H1 (cell line): ENCODE measurements at regions of chr19 and their contacts with region 1.

Region 1: DNA sequence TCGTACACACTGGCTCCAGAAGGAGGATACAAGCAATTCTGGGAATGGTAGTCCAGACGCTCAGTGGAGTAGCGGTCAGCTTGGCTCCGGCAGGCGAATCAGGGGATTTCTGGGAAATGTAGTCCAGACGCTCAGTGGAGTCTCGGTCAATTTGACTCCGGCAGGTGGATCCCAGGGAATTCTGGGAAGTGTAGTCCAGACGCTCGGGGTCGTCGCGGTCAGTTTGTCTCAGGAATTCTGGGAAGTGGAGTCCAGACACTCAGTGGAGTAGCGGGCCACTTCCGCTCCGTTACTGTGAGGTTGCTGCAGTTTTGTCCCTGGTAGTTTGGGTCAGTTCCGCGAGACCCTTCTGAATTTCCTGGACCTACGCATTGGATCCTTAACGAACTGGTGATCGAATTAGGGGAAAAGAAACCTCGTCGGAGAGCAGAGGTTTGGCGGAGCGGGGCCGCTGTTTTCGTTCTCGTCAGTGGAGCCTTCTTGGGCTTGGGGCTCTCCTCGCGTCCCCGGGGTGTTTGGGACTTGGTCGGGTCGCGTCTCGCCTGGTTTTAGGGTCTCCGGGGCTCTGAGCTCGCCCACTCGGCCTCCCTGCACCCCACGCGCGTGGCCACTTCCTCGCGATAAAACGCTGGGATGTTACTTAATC is at the start of gene ZNF225:
- DNase-seq: peak; percentile 78 to 97
- H3K4me3 ChIP-seq: peak within 1 kb of the TSS; percentile 80 to 100 (median 95)
- H3K27ac ChIP-seq: peak within 1 kb of the TSS; percentile 77
- H3K4me1 ChIP-seq: no peaks in the 10 kb centered on the region
- H3K27me3 ChIP-seq: no peaks in the 10 kb centered on the region
- CTCF ChIP-seq: no peak
- EP300 ChIP-seq: no peak
- POLR2A ChIP-seq: peak; percentile 92 to 96
- RAD21 ChIP-seq: no peak
- total RNA-seq, gene ZNF225: 4.3 and 5.0 TPM in 2 replicates

Region 2: DNA sequence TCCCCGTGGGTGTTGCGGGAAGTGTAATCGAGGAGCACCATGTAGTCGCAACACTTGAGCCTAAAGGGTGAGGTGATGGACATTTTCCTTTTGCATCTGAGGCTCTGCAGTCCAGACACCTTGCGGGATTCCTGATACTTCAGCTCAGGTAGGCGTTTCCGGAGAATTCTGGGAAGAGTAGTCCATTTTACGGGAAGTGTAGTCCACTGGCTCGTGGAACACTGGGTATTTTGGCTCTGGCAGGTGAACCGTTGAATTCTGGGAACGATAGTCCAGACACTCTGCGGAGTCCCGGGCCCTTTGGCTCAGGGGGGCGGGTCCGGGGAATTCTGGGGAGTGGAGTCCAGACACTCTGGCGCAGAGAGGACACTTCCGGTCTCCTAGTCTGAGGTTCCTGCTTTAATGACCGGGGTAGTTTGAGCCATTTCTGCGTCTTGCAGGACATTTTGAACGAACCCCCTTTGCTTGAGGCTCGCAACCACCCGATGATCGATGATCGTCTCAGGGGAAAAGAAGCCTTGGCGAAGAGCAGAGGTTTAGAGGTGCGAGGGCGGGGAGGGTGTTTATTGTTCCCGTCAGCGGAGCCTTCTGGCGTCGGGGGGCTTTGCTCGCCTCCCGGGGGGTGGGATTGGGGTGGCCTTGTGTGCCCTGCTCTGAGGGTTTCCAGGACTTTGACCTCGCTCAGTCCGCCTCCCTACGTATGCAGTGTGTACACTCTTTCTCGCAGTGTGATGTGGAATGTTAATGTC is 61.4 kb before region 1 on chr19 and contains the start of gene ZNF223:
- CTCF ChIA-PET with region 1: interaction called, 5 read pairs
- POLR2A ChIA-PET with region 1: interaction called, 18 read pairs
- DNase-seq: peak; percentile 77 to 89
- H3K4me3 ChIP-seq: peak within 1 kb of the TSS; percentile 59 to 85 (median 72)
- H3K27ac ChIP-seq: no peak within 1 kb of the TSS
- H3K4me1 ChIP-seq: peaks cover 0 to 2% (median 0%) of the 10 kb centered on the region in 4 experiments; a peak in 1 of 7 replicates
- H3K27me3 ChIP-seq: no peaks in the 10 kb centered on the region
- CTCF ChIP-seq: no peak
- EP300 ChIP-seq: no peak
- POLR2A ChIP-seq: peak in 1 of 2 experiments; percentile 60; a peak in 1 of 3 replicates
- RAD21 ChIP-seq: no peak
- total RNA-seq, gene ZNF223: 3.9 and 4.3 TPM in 2 replicates

Region 3: GRCh38 chr19:44093931-44094765 is 19.1 kb before region 1 on chr19 and contains the start of gene ZNF224:
- CTCF ChIA-PET with region 1: no interaction called
- POLR2A ChIA-PET with region 1: interaction called, 21 read pairs
- DNase-seq: peak; percentile 51 to 81
- H3K4me3 ChIP-seq: peak within 1 kb of the TSS; percentile 90 to 97 (median 94)
- H3K27ac ChIP-seq: no peak within 1 kb of the TSS
- H3K4me1 ChIP-seq: no peaks in the 10 kb centered on the region
- H3K27me3 ChIP-seq: no peaks in the 10 kb centered on the region
- CTCF ChIP-seq: no peak
- EP300 ChIP-seq: no peak
- POLR2A ChIP-seq: peak in 1 of 2 experiments; percentile 66; a peak in 1 of 3 replicates
- RAD21 ChIP-seq: 0 out of 4 replicates have a peak, but pooled peaks of 1 of the 2 experiments have one; percentile 0
- total RNA-seq, gene ZNF224: 12.7 and 17.2 TPM in 2 replicates

Region 4: GRCh38 chr19:44164673-44165512 is 51.6 kb after region 1 on chr19 and contains the start of gene ZNF226:
- CTCF ChIA-PET with region 1: no interaction called
- POLR2A ChIA-PET with region 1: interaction called, 27 read pairs
- DNase-seq: peak; percentile 75 to 80
- H3K4me3 ChIP-seq: peak within 1 kb of the TSS; percentile 77 to 95 (median 84)
- H3K27ac ChIP-seq: peak within 1 kb of the TSS; percentile 84
- H3K4me1 ChIP-seq: peaks cover 0 to 5% (median 0%) of the 10 kb centered on the region in 4 experiments; a peak in 1 of 7 replicates
- H3K27me3 ChIP-seq: no peaks in the 10 kb centered on the region
- CTCF ChIP-seq: no peak
- EP300 ChIP-seq: no peak
- POLR2A ChIP-seq: peak; percentile 50 to 90
- RAD21 ChIP-seq: no peak
- total RNA-seq, gene ZNF226: 12.6 and 18.3 TPM in 2 replicates